ENCODE measurements at regions of chr6 and their contacts with region 1.

Region 1: DNA sequence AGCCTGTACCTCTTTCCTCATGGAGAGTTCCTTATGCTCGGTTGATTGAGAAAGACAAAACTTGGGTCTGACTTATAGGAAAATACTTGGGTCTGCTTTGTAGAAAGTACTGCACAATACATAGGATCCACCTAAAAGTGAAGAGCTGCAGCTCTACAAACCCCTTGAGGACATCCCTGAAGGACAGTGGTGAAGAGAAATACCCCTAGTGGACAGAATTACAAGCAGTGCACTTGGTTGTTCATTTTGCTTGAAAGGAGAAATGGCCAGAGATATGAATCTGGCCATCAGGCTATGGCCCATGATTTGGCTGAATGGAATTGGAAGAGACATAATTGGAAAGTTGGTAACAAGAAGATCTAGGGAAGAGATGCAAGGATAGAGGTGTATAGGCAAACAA is 8.3 kb downstream of the CD24 start:
- H3K4me3 ChIP-seq: no peak overlapping the region
- H3K27ac ChIP-seq: no peak overlapping the region
- H3K4me1 ChIP-seq: no peaks in the 10 kb centered on the region
- CTCF ChIP-seq: no peak

Region 2: DNA sequence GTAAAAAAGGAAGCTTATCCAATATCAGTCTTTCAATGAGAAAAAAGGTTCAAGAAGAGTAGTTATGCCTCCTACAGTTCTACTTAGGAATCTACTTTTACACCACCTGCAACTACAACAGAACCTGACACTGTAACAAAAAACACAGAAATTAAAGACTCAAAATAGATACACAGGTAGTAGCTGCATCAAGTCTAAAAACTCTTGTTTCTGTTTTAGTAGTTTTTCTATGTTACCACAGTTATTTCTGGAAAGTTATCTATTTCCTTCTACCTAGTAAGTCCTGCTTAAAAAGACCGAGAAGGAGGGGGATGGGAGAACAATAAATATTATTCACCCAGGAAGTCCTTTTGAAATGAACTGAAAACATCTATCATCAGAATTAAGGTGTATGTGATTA is 693.1 kb before region 1 on chr6:
- CTCF ChIA-PET with region 1: no interaction called
- POLR2A ChIA-PET with region 1: interaction called, 11 read pairs
- H3K4me3 ChIP-seq: no peak overlapping the region
- H3K27ac ChIP-seq: no peak overlapping the region
- H3K4me1 ChIP-seq: peaks cover 22% of the 10 kb centered on the region
- CTCF ChIP-seq: no peak

Region 3: GRCh38 chr6:106844930-106845329 is 121.3 kb before region 1 on chr6:
- CTCF ChIA-PET with region 1: no interaction called
- POLR2A ChIA-PET with region 1: no interaction called
- H3K4me3 ChIP-seq: no peak overlapping the region
- H3K27ac ChIP-seq: no peak overlapping the region
- H3K4me1 ChIP-seq: no peaks in the 10 kb centered on the region
- CTCF ChIP-seq: no peak

Region 4: DNA sequence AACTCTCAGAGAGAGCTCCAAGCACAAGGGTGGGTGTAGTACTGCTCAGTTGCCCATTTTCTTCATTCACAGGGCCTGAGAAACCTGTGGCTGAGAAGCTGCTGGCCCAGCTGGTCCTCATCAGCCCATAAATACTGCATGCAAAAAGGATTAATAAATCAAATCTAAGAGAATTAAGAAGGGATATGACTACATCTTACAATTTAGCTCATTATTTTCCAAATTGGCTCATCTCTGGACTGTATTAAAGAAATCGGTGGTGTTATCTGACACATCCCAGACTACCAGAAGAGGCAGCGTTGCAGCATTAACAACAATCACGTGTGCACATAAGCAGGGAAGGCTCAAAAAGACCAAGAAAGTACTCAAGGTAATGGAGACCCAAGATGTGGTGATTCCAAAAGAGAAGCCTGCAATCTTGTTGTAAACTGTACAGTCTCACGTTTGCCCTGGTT is 82.4 kb before region 1 on chr6:
- CTCF ChIA-PET with region 1: no interaction called
- POLR2A ChIA-PET with region 1: no interaction called
- H3K4me3 ChIP-seq: no peak overlapping the region
- H3K27ac ChIP-seq: no peak overlapping the region
- H3K4me1 ChIP-seq: peaks cover 4% of the 10 kb centered on the region; the same call in 1 of the 2 replicates
- CTCF ChIP-seq: no peak